Activated T-helper 2 cell treated with anti-CD3 and anti-CD28 coated beads, Interferon-gamma antibody, Interleukin-2, Interleukin-4, amounts not matched to agents 10 μg/mL and 5 μg/mL and 100 μg/mL, durations not matched to agents 14 hours and 24 hours and 36 hours (primary cell): ENCODE measurements at regions of chr14 and their contacts with region 1.

Region 1: GRCh38 chr14:61452452-61452851 is 131.1 kb downstream of the PRKCH start:
- DNase-seq: peak; percentile 71
- H3K4me3 Mint-ChIP-seq: peak overlapping the region; percentile 54
- H3K27ac Mint-ChIP-seq: peak overlapping the region; percentile 99
- H3K4me1 Mint-ChIP-seq: peaks cover 88% of the 10 kb centered on the region
- H3K27me3 Mint-ChIP-seq: no peaks in the 10 kb centered on the region

Region 2: GRCh38 chr14:61296719-61297502 is 155.5 kb before region 1 on chr14:
- intact Hi-C with region 1: loop called (anchors 2 kb)
- DNase-seq: no peak
- H3K4me3 Mint-ChIP-seq: no peak overlapping the region
- H3K27ac Mint-ChIP-seq: no peak overlapping the region
- H3K4me1 Mint-ChIP-seq: peaks cover 36% of the 10 kb centered on the region
- H3K27me3 Mint-ChIP-seq: no peaks in the 10 kb centered on the region

Region 3: DNA sequence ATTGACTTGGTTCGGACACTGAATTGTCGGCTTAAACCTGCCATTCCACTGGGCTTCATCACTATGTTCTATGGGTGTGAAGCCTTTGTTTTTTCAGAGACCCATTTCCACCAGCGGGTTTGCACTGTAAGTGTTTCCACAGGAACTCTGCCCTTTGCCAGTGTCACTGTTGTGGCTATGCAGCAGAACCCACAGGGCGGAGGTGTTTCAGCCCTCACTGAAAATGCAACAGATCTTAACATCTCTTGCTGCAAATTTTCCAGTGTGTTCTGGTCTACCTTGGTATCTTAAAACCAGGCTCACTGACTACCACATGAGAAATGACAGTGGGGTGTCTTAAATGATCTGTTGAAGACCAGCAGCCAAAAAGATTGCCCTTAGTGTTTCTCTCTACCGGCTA is 110.0 kb before region 1 on chr14:
- intact Hi-C with region 1: loop called (anchors 1 kb)
- DNase-seq: peak; percentile 83
- H3K4me3 Mint-ChIP-seq: peak overlapping the region; percentile 70
- H3K27ac Mint-ChIP-seq: peak overlapping the region; percentile 97
- H3K4me1 Mint-ChIP-seq: peaks cover 82% of the 10 kb centered on the region
- H3K27me3 Mint-ChIP-seq: no peaks in the 10 kb centered on the region

Region 4: GRCh38 chr14:61388173-61388975 is 64.1 kb before region 1 on chr14:
- intact Hi-C with region 1: loop called (anchors 1 kb)
- DNase-seq: no peak
- H3K4me3 Mint-ChIP-seq: peak overlapping the region; percentile 26
- H3K27ac Mint-ChIP-seq: no peak overlapping the region
- H3K4me1 Mint-ChIP-seq: peaks cover 34% of the 10 kb centered on the region
- H3K27me3 Mint-ChIP-seq: no peaks in the 10 kb centered on the region

Region 5: GRCh38 chr14:61438860-61439684 is 13.4 kb before region 1 on chr14:
- intact Hi-C with region 1: loop called (anchors 1 kb)
- DNase-seq: no peak
- H3K4me3 Mint-ChIP-seq: peak overlapping the region; percentile 79
- H3K27ac Mint-ChIP-seq: peak overlapping the region; percentile 95
- H3K4me1 Mint-ChIP-seq: peaks cover 77% of the 10 kb centered on the region
- H3K27me3 Mint-ChIP-seq: no peaks in the 10 kb centered on the region

Region 6: DNA sequence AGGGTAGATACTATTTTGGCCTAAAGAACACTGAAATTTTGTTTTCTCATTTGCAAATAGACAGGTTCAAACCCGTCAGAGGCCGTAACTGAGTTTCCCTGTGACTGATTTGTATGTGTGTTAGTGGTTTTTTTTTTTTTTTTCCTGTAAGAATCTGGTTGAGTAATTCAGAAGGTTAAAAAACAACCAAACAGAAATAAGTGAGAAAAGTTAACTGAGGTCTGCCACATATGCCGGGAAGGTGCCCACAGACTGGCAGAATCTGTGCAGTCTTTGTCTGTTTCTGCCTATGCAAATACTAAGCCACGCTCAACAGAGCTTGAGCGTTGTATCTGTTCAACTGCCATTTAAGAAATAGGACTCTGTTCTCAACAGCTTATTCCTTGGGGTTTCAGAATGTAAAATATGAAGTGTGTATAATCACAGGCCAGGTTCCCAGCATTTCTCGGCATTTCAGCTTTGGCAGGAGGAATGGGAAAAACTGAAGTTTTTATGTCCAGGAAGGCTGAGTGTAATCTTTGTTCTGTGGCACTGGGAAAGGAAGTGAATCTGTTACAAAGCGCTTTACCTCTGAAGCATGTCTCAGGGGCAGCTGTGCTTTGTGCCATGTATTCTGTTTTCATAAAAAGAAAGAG is 50.8 kb after region 1 on chr14:
- intact Hi-C with region 1: no loop called
- DNase-seq: peak; percentile 24
- H3K4me3 Mint-ChIP-seq: peak overlapping the region; percentile 76
- H3K27ac Mint-ChIP-seq: peak overlapping the region; percentile 95
- H3K4me1 Mint-ChIP-seq: peaks cover 72% of the 10 kb centered on the region
- H3K27me3 Mint-ChIP-seq: no peaks in the 10 kb centered on the region

Region 7: GRCh38 chr14:61695695-61696527 is 243.5 kb after region 1 on chr14:
- intact Hi-C with region 1: no loop called
- DNase-seq: peak; percentile 52
- H3K4me3 Mint-ChIP-seq: peak overlapping the region; percentile 89
- H3K27ac Mint-ChIP-seq: peak overlapping the region; percentile 95
- H3K4me1 Mint-ChIP-seq: peaks cover 55% of the 10 kb centered on the region
- H3K27me3 Mint-ChIP-seq: no peaks in the 10 kb centered on the region